Activated naive CD4-positive, alpha-beta T cell treated with anti-CD3 and anti-CD28 coated beads, Interleukin-2, amount 10 ng/mL, durations not matched to agents 7 days and 5 days (primary cell): ENCODE measurements at regions of chr17 and their contacts with region 1.

Region 1: DNA sequence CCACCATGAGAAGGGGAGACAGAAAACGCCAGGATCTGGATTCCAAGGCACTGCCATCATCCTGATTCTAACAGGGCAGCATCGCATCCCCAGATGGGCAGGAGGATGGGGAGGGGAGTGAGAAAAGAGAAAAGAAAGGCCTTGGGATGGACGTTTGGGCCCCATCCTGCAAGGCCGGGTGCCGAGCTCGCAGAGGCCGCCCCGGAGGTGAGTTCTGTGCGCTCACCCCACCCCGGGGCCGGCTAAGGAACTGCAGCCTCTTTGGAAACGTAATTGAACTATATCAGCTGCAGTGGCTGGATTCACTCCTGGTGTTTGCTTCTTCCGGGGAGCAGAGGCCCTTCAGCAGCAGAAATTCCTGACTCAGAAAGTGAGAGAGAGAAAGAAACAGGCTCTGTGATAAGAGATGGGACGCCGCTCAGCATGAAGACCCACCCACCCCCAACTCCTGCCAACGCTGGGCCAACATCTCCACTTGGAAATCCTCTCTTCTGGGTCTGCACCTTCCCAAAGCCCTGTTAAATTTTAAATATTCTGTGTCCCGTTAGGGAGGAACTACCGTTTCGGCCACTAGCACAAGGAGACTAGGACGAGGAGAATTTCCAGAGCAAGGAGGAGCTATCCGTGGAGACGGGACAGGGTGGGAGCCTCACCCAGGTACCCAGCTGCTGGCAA is 8.5 kb upstream of the SSTR2 start:
- DNase-seq: peak; percentile 73
- H3K4me3 Mint-ChIP-seq: no peak overlapping the region
- H3K27ac Mint-ChIP-seq: no peak overlapping the region
- H3K4me1 Mint-ChIP-seq: peaks cover 4% of the 10 kb centered on the region
- H3K27me3 Mint-ChIP-seq: peaks cover 51% of the 10 kb centered on the region

Region 2: DNA sequence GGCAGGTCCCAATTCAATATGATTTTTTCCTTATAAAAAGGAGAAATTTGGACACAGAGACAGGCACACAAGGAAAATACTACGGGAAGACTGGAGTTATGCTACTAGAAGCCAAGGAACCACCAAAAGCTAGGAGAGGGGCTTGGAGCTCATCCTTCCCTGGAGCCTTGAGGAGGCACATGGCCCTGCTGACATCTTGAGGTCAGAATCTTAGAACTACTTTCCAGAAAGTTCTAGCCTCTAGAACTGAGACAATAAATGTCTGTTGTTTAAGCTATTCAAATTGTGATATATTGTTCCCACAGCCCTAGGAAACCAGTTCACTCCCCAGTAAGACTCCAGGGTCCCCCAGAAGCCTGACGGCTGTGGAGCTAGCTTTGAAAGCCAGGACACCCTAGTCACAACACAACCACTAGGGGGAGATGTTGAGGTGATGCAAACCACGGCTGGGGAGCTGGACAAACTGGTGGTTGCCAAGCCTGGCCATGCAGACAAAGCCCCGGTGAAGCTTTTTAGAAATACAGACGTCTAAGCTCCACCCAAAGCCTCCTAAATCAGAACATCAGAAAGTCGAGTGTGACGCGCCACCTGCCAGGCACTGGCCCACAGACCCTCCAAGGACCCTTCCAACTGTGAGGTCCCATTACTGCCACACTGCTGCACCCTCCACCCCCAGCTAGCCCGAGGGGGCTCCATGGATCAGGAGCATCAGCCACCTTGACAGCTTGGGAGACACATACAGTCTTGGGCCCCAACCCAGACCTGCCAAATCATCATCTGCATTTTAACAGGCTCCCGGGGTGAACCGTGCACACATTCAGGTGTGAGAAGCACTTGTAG is 170.2 kb before region 1 on chr17:
- CTCF ChIA-PET with region 1: interaction called, 38 read pairs
- DNase-seq: peak; percentile 64
- H3K4me3 Mint-ChIP-seq: no peak overlapping the region
- H3K27ac Mint-ChIP-seq: no peak overlapping the region
- H3K4me1 Mint-ChIP-seq: no peaks in the 10 kb centered on the region
- H3K27me3 Mint-ChIP-seq: no peaks in the 10 kb centered on the region